ENCODE measurements at regions of chr7 and their contacts with region 1.

Region 1: DNA sequence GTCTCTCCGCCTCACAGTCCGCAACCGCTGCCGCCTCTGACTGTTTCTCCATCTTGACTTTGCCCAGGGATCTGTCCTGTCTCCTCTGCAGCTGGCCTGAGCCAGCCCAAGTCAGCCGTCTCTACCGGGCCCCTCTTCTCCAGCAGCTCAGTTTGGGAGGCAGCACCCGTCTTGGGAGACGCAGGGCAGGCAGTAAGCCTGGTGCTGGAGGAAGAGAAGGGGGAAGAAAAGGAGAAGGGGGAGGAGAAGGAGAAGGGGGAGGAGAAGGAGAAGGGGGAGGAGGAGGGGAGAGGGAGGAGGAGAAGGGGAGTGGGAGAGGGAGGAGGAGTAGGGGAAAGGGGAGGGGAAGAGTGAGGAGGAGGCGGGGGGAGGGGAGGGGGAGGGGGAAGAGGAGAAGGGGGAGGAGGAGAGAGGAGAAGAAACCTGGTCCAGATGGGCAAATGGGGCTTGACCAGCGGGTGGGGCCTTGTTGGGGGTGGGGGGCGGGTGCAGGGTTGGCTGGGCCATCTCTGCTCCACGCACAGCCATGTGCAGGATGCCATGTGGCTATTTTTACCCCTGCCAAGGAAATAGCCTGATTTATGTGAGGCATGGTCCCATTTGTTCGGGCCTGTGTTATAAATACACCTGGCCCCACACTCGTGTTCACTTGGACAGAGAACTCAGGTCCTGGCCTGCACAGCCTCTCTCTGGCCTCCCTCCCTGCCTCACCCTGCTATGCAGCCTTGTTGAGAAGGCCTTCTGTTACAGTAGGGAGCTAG is 35.9 kb upstream of the FZD9 start:
- DNase-seq: peak; percentile 90 to 91
- ATAC-seq: peak; percentile 89 to 91
- H3K4me3 ChIP-seq: peak overlapping the region; percentile 28 to 58 (median 50)
- H3K27ac ChIP-seq: peak overlapping the region; percentile 83 to 97 (median 90)
- H3K4me1 ChIP-seq: peaks cover 20 to 24% of the 10 kb centered on the region in 2 donors
- H3K27me3 ChIP-seq: no peaks in the 10 kb centered on the region
- CTCF ChIP-seq: no peak
- POLR2A ChIP-seq: peak; percentile 35 to 39

Region 2: DNA sequence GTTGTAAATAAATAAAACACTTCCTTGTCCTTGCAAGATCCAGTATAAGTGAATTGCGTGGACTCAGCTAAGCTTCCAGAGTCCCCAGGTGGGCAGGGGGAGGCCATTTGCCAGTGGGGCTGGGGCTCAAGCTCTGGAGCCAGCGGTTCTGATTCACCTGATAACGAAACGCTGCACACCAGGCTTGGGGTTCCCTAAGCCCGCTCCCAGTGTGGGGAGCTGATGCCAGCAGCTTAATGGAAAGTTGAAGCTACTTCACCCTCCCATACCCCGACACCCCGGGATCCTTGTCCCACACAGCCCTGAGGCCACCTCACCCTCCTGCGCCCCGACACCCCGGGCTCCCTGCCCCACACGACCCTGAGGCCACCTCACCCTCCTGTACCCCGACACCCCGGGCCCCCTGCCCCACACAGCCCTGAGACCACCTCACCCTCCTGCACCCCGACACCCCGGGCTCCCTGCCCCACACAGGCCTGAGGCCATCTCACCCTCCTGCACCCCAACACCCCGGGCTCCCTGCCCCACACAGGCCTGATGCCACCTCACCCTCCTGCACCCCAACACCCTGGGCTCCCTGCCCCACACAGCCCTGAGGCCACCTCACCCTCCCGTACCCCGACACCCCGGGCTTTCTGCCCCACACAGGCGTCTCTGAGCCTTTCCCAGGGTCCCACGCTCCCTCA is 39.0 kb before region 1 on chr7:
- in situ Hi-C with region 1: no loop called
- intact Hi-C with region 1: loop called (anchors 5 kb)
- DNase-seq: no peak
- ATAC-seq: no peak
- H3K4me3 ChIP-seq: peak overlapping the region in 3 of 4 donors; percentile 37 to 52 (median 47)
- H3K27ac ChIP-seq: peak overlapping the region; percentile 61 to 79 (median 62)
- H3K4me1 ChIP-seq: peaks cover 0 to 9% of the 10 kb centered on the region in 2 donors
- H3K27me3 ChIP-seq: no peaks in the 10 kb centered on the region
- CTCF ChIP-seq: no peak
- POLR2A ChIP-seq: no peak